Gastrocnemius medialis (tissue), 4 donors: ENCODE measurements at regions of chr11 and their contacts with region 1.

Region 1: GRCh38 chr11:130861902-130862860 is 54.1 kb downstream of the SNX19 start:
- DNase-seq: peak; percentile 76 to 82
- ATAC-seq: peak; percentile 49 to 57
- H3K4me3 ChIP-seq: no peak overlapping the region
- H3K27ac ChIP-seq: peak overlapping the region; percentile 24 to 67 (median 62)
- H3K4me1 ChIP-seq: peaks cover 38 to 55% of the 10 kb centered on the region in 2 donors
- H3K27me3 ChIP-seq: no peaks in the 10 kb centered on the region
- CTCF ChIP-seq: peak; percentile 100
- POLR2A ChIP-seq: no peak

Region 2: GRCh38 chr11:130369141-130369691 is 493.0 kb before region 1 on chr11:
- in situ Hi-C with region 1: no loop called
- intact Hi-C with region 1: loop called (anchors 5 kb)
- DNase-seq: peak; percentile 73 to 88
- ATAC-seq: peak; percentile 96 to 99
- H3K4me3 ChIP-seq: no peak overlapping the region
- H3K27ac ChIP-seq: peak overlapping the region; percentile 57 to 76 (median 72)
- H3K4me1 ChIP-seq: peaks cover 16 to 28% of the 10 kb centered on the region in 2 donors
- H3K27me3 ChIP-seq: no peaks in the 10 kb centered on the region
- CTCF ChIP-seq: peak in 4 of 5 experiments; percentile 18 to 59 (median 40)
- POLR2A ChIP-seq: no peak

Region 3: DNA sequence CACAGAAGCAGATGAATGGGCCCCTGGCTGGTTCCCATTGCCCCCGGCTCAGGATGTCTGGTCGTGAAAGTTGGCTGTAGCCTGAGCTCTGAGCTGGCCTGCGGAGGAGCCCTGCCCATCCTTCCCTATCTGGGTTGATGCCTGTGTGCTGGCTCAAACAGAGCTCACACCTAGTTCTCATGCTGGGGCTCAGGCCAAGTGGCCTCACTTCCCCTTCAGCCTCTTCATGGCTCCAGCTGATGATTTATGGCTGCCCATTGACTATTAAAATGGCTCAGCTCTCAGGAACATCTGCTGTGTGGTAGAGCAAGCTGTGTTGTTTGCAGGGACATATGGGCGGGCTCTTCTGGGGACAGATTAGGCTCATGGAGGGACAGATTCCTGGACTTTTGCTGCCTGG is 349.0 kb before region 1 on chr11:
- in situ Hi-C with region 1: no loop called
- intact Hi-C with region 1: loop called (anchors 5 kb)
- DNase-seq: peak; percentile 90 to 94
- ATAC-seq: peak; percentile 78 to 82
- H3K4me3 ChIP-seq: no peak overlapping the region
- H3K27ac ChIP-seq: peak overlapping the region; percentile 61 to 86 (median 81)
- H3K4me1 ChIP-seq: peaks cover 41 to 46% of the 10 kb centered on the region in 2 donors
- H3K27me3 ChIP-seq: no peaks in the 10 kb centered on the region
- CTCF ChIP-seq: no peak
- POLR2A ChIP-seq: no peak

Region 4: GRCh38 chr11:130827451-130828377 is 34.5 kb before region 1 on chr11:
- in situ Hi-C with region 1: no loop called
- intact Hi-C with region 1: loop called (anchors 2 kb)
- DNase-seq: peak; percentile 20 to 53
- ATAC-seq: peak; percentile 36 to 72
- H3K4me3 ChIP-seq: no peak overlapping the region
- H3K27ac ChIP-seq: peak overlapping the region in 1 of 4 donors; percentile 61
- H3K4me1 ChIP-seq: peaks cover 42 to 47% of the 10 kb centered on the region in 2 donors
- H3K27me3 ChIP-seq: no peaks in the 10 kb centered on the region
- CTCF ChIP-seq: peak in 2 of 5 experiments; percentile 20 to 37
- POLR2A ChIP-seq: no peak

Region 5: DNA sequence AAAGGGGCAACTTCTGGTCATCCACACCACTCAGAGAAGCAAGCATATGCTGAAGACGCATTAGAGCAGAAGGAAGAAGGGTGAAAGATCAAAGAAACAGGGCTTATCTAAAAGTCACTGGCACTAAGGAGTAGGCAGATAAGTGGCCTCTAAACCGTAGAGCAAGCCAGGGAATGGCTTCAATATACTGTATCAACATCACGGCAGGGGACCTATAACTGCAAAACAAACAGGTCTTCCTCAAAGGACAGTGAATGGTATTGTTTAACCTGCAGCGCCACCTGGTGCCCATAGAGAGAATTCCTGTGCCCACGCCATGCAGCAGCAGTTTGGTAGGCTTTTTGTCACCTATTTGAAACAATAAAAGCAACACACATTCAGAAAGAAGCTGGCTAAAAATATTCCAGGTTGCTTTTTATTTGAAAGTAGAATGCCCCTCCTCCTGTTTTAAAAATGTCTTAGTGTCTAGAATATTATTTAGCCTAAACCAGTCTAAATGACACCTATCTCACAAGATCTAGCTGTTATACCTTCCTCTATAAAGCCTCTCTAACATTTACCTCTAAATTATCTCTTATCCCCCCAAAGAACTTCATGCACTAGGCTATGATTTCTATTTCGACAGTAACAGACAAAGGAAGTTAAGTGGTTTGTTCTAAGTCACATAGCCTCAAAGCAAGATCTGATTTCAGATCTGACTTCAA is 32.3 kb after region 1 on chr11:
- in situ Hi-C with region 1: no loop called
- intact Hi-C with region 1: loop called (anchors 1 kb)
- DNase-seq: peak; percentile 34 to 62
- ATAC-seq: peak; percentile 62 to 68
- H3K4me3 ChIP-seq: no peak overlapping the region
- H3K27ac ChIP-seq: no peak overlapping the region
- H3K4me1 ChIP-seq: peaks cover 31 to 36% of the 10 kb centered on the region in 2 donors
- H3K27me3 ChIP-seq: no peaks in the 10 kb centered on the region
- CTCF ChIP-seq: peak; percentile 74 to 89 (median 83)
- POLR2A ChIP-seq: no peak